ENCODE measurements at regions of chr2 and their contacts with region 1.

Region 1: GRCh38 chr2:38740851-38741731 is 10.1 kb downstream of the SRSF7 start:
- DNase-seq: peak; percentile 16
- H3K4me3 ChIP-seq: no peak overlapping the region
- H3K27ac ChIP-seq: no peak overlapping the region
- H3K4me1 ChIP-seq: no peaks in the 10 kb centered on the region
- H3K27me3 ChIP-seq: no peaks in the 10 kb centered on the region
- CTCF ChIP-seq: peak; percentile 30 to 31

Region 2: GRCh38 chr2:38462109-38462759 is 278.9 kb before region 1 on chr2:
- CTCF ChIA-PET with region 1: no interaction called
- dilution Hi-C with region 1: no loop called
- in situ Hi-C with region 1: no loop called
- intact Hi-C with region 1: no loop called
- DNase-seq: peak; percentile 100
- H3K4me3 ChIP-seq: no peak overlapping the region
- H3K27ac ChIP-seq: peak overlapping the region; percentile 97
- H3K4me1 ChIP-seq: peaks cover 26% of the 10 kb centered on the region
- H3K27me3 ChIP-seq: no peaks in the 10 kb centered on the region
- CTCF ChIP-seq: no peak

Region 3: GRCh38 chr2:38535744-38536506 is 205.2 kb before region 1 on chr2:
- CTCF ChIA-PET with region 1: no interaction called
- dilution Hi-C with region 1: no loop called
- in situ Hi-C with region 1: no loop called
- intact Hi-C with region 1: loop called (anchors 2 kb)
- DNase-seq: peak; percentile 53
- H3K4me3 ChIP-seq: peak overlapping the region; percentile 44 to 54 (median 45)
- H3K27ac ChIP-seq: no peak overlapping the region
- H3K4me1 ChIP-seq: peaks cover 6% of the 10 kb centered on the region
- H3K27me3 ChIP-seq: no peaks in the 10 kb centered on the region
- CTCF ChIP-seq: peak; percentile 61 to 87